Left ventricle myocardium inferior (tissue), 1 donor: ENCODE measurements at regions of chr4 and their contacts with region 1.

Region 1: DNA sequence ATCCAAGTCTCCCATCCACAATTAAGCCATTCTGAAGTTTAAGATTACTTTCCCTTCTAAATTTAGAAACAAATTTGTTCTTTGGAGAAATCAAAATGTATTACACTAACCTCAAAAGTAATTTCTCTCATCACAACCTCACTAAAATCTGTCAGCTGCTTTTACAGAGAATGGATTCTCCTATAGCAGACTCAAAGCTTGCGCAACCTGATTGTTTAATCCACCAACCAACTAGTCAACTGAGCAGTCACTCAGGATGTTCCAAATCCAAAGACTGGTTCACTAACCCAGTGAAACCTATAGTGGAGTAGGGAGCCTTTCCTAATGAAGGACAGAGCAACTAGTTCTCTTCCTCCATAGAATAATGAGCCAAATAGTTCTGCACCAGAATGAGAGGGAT is 44.3 kb downstream of the RCHY1 start:
- DNase-seq: no peak
- H3K4me3 ChIP-seq: no peak overlapping the region
- H3K27ac ChIP-seq: no peak overlapping the region
- H3K4me1 ChIP-seq: peaks cover 12% of the 10 kb centered on the region
- H3K27me3 ChIP-seq: no peaks in the 10 kb centered on the region
- CTCF ChIP-seq: no peak

Region 2: DNA sequence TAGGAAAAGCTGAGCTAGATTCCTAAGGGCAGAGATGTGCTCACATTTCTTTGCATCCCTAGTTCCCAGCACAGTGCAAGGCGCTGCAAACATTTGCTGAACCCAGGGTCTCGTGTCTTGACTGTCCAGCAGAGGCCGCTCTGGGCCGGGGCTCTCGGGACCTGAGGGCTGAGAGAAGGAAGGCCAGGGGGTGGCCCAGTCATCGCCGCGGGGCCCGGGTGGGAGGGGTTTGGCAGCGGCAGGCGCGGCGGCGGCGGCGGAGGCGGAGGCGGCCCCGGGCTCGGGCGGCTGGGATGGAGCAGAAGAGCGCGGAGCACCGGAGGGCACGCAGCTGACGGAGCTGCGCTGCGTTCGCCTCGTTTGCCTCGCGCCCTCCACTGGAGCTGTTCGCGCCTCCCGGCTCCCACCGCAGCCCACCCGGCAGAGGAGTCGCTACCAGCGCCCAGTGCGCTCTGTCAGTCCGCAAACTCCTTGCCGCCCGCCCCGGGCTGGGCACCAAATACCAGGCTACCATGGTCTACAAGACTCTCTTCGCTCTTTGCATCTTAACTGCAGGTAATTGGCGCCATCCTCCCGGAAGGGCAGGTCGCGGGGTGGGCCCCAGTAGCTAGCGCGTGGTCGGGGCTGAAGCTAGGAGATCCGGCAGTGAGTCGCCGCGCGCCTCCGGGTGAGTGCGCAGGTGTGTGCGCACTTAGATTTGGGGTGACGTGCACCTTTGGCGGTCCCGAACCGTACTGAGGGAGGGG is 536.9 kb before region 1 on chr4 and contains the start of gene PARM1:
- intact Hi-C with region 1: loop called (anchors 5 kb)
- DNase-seq: peak; percentile 92
- H3K4me3 ChIP-seq: peak within 1 kb of the TSS; percentile 90
- H3K27ac ChIP-seq: peak within 1 kb of the TSS; percentile 87
- H3K4me1 ChIP-seq: peaks cover 41% of the 10 kb centered on the region
- H3K27me3 ChIP-seq: peaks cover 32% of the 10 kb centered on the region
- CTCF ChIP-seq: peak; percentile 78
- total RNA-seq, gene PARM1: 90.7 TPM

Region 3: GRCh38 chr4:75605928-75606327 is 136.0 kb after region 1 on chr4:
- intact Hi-C with region 1: no loop called
- DNase-seq: no peak
- H3K4me3 ChIP-seq: no peak overlapping the region
- H3K27ac ChIP-seq: no peak overlapping the region
- H3K4me1 ChIP-seq: no peaks in the 10 kb centered on the region
- H3K27me3 ChIP-seq: no peaks in the 10 kb centered on the region
- CTCF ChIP-seq: no peak